Activated naive CD4-positive, alpha-beta T cell treated with anti-CD3 and anti-CD28 coated beads for 36 hours (primary cell): ENCODE measurements at regions of chr1 and their contacts with region 1.

Region 1: GRCh38 chr1:228165372-228166169 is at the start of gene IBA57:
- DNase-seq: peak; percentile 99
- H3K4me3 Mint-ChIP-seq: peak within 1 kb of the TSS; percentile 91
- H3K27ac Mint-ChIP-seq: peak within 1 kb of the TSS; percentile 93
- H3K4me1 Mint-ChIP-seq: peaks cover 42% of the 10 kb centered on the region
- H3K27me3 Mint-ChIP-seq: no peaks in the 10 kb centered on the region
- total RNA-seq, gene IBA57: 4.9 to 5.5 TPM

Region 2: DNA sequence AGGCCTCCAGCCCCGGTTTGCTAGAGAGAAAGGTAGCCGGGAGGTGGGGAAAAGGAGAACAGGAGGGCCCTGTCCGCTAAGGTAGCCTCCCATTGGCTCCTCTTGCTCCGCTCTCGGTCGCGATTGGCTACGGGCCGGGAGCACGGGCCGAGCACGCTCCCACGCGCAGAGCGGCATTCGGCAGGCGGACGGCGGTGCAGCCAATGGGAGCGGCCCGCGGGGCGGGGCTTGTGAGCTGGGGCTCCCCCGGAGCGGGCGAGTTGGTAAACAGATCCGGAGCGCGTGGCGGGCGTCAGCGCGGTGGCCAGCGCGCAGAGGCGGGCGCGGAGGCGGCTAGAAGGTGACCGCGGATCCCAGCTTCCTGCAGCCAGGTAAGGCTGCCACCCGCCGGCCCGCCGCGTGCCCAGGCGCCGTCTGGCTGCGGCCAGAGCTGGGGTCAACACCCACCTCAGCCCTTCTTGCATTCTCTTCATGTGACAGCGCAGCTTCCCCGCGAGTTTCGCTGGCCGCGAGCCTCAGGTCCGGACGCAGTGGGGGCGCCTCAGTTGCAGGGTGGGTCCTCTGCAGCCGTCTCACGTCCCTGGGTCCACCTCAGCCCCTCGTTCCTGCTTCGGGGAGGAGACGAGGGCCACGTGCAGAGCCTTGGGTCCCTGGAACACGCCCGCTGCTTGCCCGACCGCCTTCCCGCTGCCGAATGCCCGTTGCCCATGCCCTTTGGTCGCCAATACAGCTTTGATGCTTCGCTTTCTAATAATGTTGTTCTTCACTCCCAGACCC is 1225.4 kb before region 1 on chr1 and contains the start of gene COQ8A:
- CTCF ChIA-PET with region 1: no interaction called
- intact Hi-C with region 1: loop called (anchors 5 kb)
- DNase-seq: peak; percentile 99
- H3K4me3 Mint-ChIP-seq: peak within 1 kb of the TSS; percentile 82
- H3K27ac Mint-ChIP-seq: peak within 1 kb of the TSS; percentile 90
- H3K4me1 Mint-ChIP-seq: peaks cover 48% of the 10 kb centered on the region
- H3K27me3 Mint-ChIP-seq: no peaks in the 10 kb centered on the region
- total RNA-seq, gene COQ8A: 24.8 to 26.5 TPM

Region 3: GRCh38 chr1:227065311-227065710 is 1100.3 kb before region 1 on chr1:
- CTCF ChIA-PET with region 1: no interaction called
- intact Hi-C with region 1: no loop called
- DNase-seq: no peak
- H3K4me3 Mint-ChIP-seq: no peak overlapping the region
- H3K27ac Mint-ChIP-seq: no peak overlapping the region
- H3K4me1 Mint-ChIP-seq: peaks cover 3% of the 10 kb centered on the region
- H3K27me3 Mint-ChIP-seq: peaks cover 10% of the 10 kb centered on the region

Region 4: GRCh38 chr1:227808566-227808965 is 357.0 kb before region 1 on chr1:
- CTCF ChIA-PET with region 1: no interaction called
- intact Hi-C with region 1: no loop called
- DNase-seq: no peak
- H3K4me3 Mint-ChIP-seq: no peak overlapping the region
- H3K27ac Mint-ChIP-seq: no peak overlapping the region
- H3K4me1 Mint-ChIP-seq: peaks cover 9% of the 10 kb centered on the region
- H3K27me3 Mint-ChIP-seq: peaks cover 2% of the 10 kb centered on the region

Region 5: GRCh38 chr1:227999056-227999930 is 166.3 kb before region 1 on chr1:
- CTCF ChIA-PET with region 1: interaction called, 10 read pairs
- intact Hi-C with region 1: no loop called
- DNase-seq: peak; percentile 86
- H3K4me3 Mint-ChIP-seq: no peak overlapping the region
- H3K27ac Mint-ChIP-seq: no peak overlapping the region
- H3K4me1 Mint-ChIP-seq: no peaks in the 10 kb centered on the region
- H3K27me3 Mint-ChIP-seq: peaks cover 26% of the 10 kb centered on the region

Region 6: GRCh38 chr1:228109073-228109961 is 56.3 kb before region 1 on chr1 and contains the start of gene MRPL55:
- CTCF ChIA-PET with region 1: interaction called, 3 read pairs
- intact Hi-C with region 1: loop called (anchors 1 kb)
- DNase-seq: peak; percentile 98
- H3K4me3 Mint-ChIP-seq: peak within 1 kb of the TSS; percentile 91
- H3K27ac Mint-ChIP-seq: peak within 1 kb of the TSS; percentile 85
- H3K4me1 Mint-ChIP-seq: peaks cover 27% of the 10 kb centered on the region
- H3K27me3 Mint-ChIP-seq: no peaks in the 10 kb centered on the region
- total RNA-seq, gene MRPL55: 45.5 TPM

Region 7: GRCh38 chr1:228212966-228213844 is 47.6 kb after region 1 on chr1:
- CTCF ChIA-PET with region 1: interaction called, 4 read pairs
- intact Hi-C with region 1: loop called (anchors 1 kb)
- DNase-seq: peak; percentile 92
- H3K4me3 Mint-ChIP-seq: peak overlapping the region; percentile 83
- H3K27ac Mint-ChIP-seq: peak overlapping the region; percentile 50
- H3K4me1 Mint-ChIP-seq: no peaks in the 10 kb centered on the region
- H3K27me3 Mint-ChIP-seq: no peaks in the 10 kb centered on the region

Region 8: GRCh38 chr1:228457396-228458176 is 292.0 kb after region 1 on chr1:
- CTCF ChIA-PET with region 1: no interaction called
- intact Hi-C with region 1: loop called (anchors 1 kb)
- DNase-seq: peak; percentile 93
- H3K4me3 Mint-ChIP-seq: peak overlapping the region; percentile 95
- H3K27ac Mint-ChIP-seq: peak overlapping the region; percentile 97
- H3K4me1 Mint-ChIP-seq: peaks cover 32% of the 10 kb centered on the region
- H3K27me3 Mint-ChIP-seq: peaks cover 7% of the 10 kb centered on the region